T-cell (primary cell): ENCODE measurements at regions of chr1 and their contacts with region 1.

Region 1: GRCh38 chr1:9960706-9961562 is 17.7 kb downstream of the NMNAT1 start:
- DNase-seq: peak in 1 of 35 experiments; percentile 0
- ATAC-seq: no peak
- H3K4me3 ChIP-seq: no peak overlapping the region
- H3K4me3 Mint-ChIP-seq: no peak overlapping the region
- H3K27ac ChIP-seq: no peak overlapping the region
- H3K27ac Mint-ChIP-seq: no peak overlapping the region
- H3K4me1 ChIP-seq: no peaks in the 10 kb centered on the region
- H3K4me1 Mint-ChIP-seq: no peaks in the 10 kb centered on the region
- H3K27me3 ChIP-seq: no peaks in the 10 kb centered on the region
- H3K27me3 Mint-ChIP-seq: no peaks in the 10 kb centered on the region

Region 2: DNA sequence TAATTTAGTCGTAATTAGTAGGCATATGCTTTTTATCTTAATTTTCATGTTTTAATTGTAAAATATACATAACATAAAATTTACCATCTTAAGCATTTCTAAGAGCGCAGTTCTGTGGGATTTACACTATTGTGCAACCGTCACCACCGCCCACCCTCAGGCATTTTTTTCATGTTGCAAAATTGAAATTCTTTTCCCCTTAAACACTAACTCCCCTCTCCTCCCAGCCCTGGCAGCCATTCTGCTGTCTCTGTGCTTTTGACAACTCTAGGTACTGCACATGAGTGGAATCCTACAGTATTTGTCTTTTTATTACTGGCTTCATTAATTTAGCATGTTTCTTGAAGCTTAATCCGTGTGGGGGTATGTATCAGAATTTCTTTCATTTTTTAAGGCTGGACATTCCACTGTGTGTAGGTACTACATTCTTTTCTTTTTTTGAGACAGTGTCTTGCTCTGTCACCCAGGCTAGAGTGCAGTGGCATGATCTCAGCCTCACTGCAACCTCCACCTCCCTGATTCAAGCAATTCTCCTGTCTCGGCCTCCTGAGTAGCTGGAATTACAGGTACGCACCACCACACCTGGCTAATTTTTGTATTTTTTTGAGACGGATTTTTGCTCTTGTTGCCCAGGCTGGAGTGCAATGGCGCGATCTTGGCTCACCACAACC is 301.5 kb before region 1 on chr1:
- CTCF ChIA-PET with region 1: no interaction called
- POLR2A ChIA-PET with region 1: interaction called in 1 of 2 experiments, 10 read pairs
- DNase-seq: no peak
- ATAC-seq: no peak
- H3K4me3 ChIP-seq: no peak overlapping the region
- H3K4me3 Mint-ChIP-seq: peak overlapping the region in 1 of 3 donors; percentile 100
- H3K27ac ChIP-seq: no peak overlapping the region
- H3K27ac Mint-ChIP-seq: peak overlapping the region; percentile 75 to 82
- H3K4me1 ChIP-seq: peaks cover 14 to 89% of the 10 kb centered on the region in 2 experiments
- H3K4me1 Mint-ChIP-seq: peaks cover 79 to 82% (median 82%) of the 10 kb centered on the region in 3 donors
- H3K27me3 ChIP-seq: no peaks in the 10 kb centered on the region
- H3K27me3 Mint-ChIP-seq: no peaks in the 10 kb centered on the region

Region 3: DNA sequence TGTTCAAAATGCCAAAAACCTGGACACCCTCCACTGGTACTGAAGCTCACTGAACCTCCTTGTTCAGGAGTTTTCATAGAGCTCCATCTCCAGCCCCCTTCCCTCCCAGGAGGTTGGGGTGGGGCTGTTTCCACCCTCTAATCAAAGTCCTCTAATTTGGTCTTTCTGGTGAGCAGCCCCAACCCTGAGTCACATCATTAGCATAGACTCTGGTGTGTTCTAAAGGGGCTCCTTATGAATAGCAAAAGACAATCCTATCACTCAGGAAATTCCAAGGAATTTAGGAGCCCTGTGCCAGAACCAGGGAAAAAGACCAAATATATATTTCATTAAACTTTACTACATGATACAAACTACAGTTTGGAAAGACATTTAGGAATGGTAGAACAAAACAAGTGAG is 58.6 kb after region 1 on chr1:
- CTCF ChIA-PET with region 1: no interaction called
- POLR2A ChIA-PET with region 1: no interaction called
- DNase-seq: no peak
- ATAC-seq: no peak
- H3K4me3 ChIP-seq: no peak overlapping the region
- H3K4me3 Mint-ChIP-seq: no peak overlapping the region
- H3K27ac ChIP-seq: no peak overlapping the region
- H3K27ac Mint-ChIP-seq: no peak overlapping the region
- H3K4me1 ChIP-seq: no peaks in the 10 kb centered on the region
- H3K4me1 Mint-ChIP-seq: peaks cover 0 to 4% (median 2%) of the 10 kb centered on the region in 3 donors
- H3K27me3 ChIP-seq: no peaks in the 10 kb centered on the region
- H3K27me3 Mint-ChIP-seq: no peaks in the 10 kb centered on the region